ENCODE measurements at regions of chr14 and their contacts with region 1.

Region 1: DNA sequence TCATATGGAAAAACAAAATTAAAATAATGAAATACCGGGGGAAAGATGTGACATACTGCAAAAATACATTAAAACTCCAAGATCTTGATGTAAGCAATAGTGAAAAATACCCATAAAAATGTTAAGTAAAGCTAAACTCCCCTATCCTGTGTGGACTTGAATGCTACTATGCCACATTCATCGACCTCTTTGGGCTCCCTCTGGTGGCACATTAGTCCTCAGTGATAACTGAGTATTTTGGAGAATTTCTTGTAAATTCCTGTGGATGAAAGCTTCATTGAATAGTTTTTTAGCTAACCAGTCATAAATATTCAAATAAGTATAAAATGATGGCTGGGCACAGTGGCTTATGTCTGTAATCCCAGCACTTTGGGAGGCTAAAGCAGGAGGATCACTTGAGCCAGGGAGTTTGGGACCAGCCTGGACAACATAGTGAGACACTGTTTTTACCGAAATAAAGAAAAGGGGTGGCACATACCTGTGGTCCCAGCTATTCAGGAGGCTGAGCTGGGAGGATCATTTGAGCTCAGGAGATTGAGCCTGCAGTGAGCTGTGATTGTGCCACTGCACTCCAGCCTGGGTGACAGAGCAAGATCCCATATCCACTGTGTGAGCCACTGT is 42.4 kb upstream of the SGPP1 start:
- DNase-seq: peak; percentile 75
- ATAC-seq: peak; percentile 92
- H3K4me3 Mint-ChIP-seq: no peak overlapping the region
- H3K27ac Mint-ChIP-seq: peak overlapping the region; percentile 6
- H3K4me1 Mint-ChIP-seq: peaks cover 13% of the 10 kb centered on the region
- H3K27me3 Mint-ChIP-seq: no peaks in the 10 kb centered on the region

Region 2: DNA sequence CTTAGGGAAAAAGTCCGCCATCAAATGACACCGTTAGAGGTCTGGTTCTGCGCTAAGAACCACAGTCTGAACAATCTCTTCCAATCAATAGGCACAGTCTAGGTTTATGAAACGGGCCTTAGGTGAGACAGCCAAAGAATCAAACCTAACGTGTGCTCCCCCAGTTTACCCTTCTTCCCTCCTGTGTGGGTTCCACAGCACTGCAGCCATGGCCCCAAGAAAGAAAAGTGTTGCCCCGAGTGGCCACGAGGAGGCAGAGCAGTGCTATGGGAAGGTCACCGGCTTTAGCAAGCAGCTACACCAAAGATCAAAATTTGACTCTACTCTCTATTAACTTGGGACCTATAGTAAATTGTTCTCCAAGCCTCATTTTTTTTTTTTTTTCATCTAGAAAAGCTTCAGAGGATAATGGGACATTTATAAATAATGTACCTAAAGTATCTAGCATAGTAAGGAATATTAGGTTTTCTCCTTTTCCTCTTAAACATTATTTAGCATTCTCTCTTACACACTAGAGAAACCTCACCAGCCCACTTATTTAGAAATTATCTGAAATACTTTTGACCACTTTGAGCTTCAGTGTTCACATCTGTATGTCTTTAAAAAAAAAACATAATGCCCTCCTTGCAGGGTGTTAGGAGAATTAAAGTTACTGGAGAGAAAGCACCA is 381.4 kb before region 1 on chr14:
- CTCF ChIA-PET with region 1: interaction called, 39 read pairs
- POLR2A ChIA-PET with region 1: no interaction called
- DNase-seq: peak; percentile 73
- ATAC-seq: peak; percentile 64
- H3K4me3 Mint-ChIP-seq: no peak overlapping the region
- H3K27ac Mint-ChIP-seq: no peak overlapping the region
- H3K4me1 Mint-ChIP-seq: peaks cover 17% of the 10 kb centered on the region
- H3K27me3 Mint-ChIP-seq: no peaks in the 10 kb centered on the region

Region 3: GRCh38 chr14:63641473-63642228 is 128.6 kb before region 1 on chr14 and contains the start of gene WDR89:
- CTCF ChIA-PET with region 1: interaction called, 23 read pairs
- POLR2A ChIA-PET with region 1: no interaction called
- DNase-seq: peak; percentile 98
- ATAC-seq: peak; percentile 93
- H3K4me3 Mint-ChIP-seq: peak within 1 kb of the TSS; percentile 76
- H3K27ac Mint-ChIP-seq: peak within 1 kb of the TSS; percentile 92
- H3K4me1 Mint-ChIP-seq: peaks cover 34% of the 10 kb centered on the region
- H3K27me3 Mint-ChIP-seq: no peaks in the 10 kb centered on the region
- total RNA-seq, gene WDR89: 21.8 to 21.9 TPM

Region 4: DNA sequence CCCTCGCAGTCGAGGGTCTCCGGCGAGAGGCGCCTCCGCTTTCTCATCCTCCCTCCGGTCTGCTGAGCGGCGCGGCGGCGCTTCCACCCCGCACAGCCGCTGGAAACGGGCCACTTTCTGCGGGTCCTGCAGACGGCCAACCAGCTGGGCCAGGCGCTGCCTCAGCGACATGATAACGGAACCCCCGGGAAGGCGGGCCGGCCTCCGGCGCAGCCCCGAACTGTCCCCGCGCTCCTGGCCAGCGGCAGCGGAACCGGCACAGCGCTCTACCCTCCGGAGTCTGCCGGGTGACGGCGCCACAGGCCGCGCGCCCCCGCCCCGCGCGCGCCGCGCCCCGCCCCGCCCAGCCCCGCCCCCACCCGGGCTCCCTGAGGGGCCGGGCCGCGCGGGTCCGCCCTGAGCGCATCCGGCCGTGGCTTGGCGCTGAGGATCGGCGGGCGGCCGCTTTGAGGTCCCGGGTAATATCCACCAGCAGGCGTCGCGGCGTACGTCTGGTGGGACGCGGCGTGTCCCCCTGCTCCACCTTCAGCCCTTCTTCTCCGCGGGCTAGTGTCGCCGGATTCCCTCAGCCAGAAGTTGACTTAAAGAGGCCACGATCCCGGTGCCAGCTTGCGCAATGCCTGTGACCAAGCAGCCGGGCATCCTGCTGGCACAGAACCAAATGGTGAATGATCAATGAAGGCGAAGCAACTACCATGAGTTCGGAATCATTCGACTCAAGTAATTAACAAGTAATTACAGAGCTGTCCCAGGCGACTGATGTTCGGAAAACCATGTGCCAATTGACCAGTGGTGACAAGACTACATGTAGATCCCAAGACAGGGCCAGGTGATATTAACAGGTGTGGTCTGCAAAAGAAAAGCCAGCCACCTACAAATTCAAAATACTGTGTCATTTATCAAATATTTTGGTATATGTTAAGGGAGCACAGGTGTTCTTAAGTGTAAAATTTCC is 42.2 kb before region 1 on chr14 and contains the start of gene SGPP1:
- CTCF ChIA-PET with region 1: interaction called, 44 read pairs
- POLR2A ChIA-PET with region 1: interaction called, 5 read pairs
- DNase-seq: peak; percentile 89
- ATAC-seq: peak; percentile 95
- H3K4me3 Mint-ChIP-seq: peak within 1 kb of the TSS; percentile 97
- H3K27ac Mint-ChIP-seq: peak within 1 kb of the TSS; percentile 98
- H3K4me1 Mint-ChIP-seq: peaks cover 32% of the 10 kb centered on the region
- H3K27me3 Mint-ChIP-seq: peaks cover 7% of the 10 kb centered on the region
- total RNA-seq, gene SGPP1: 18.2 to 19.9 TPM

Region 5: GRCh38 chr14:63759456-63759855 is 10.8 kb before region 1 on chr14:
- CTCF ChIA-PET with region 1: interaction called, 12 read pairs
- POLR2A ChIA-PET with region 1: no interaction called
- DNase-seq: peak; percentile 62
- ATAC-seq: peak; percentile 98
- H3K4me3 Mint-ChIP-seq: peak overlapping the region; percentile 73
- H3K27ac Mint-ChIP-seq: peak overlapping the region; percentile 95
- H3K4me1 Mint-ChIP-seq: peaks cover 19% of the 10 kb centered on the region
- H3K27me3 Mint-ChIP-seq: no peaks in the 10 kb centered on the region